Naive thymus-derived CD4-positive, alpha-beta T cell (primary cell): ENCODE measurements at regions of chr12 and their contacts with region 1.

Region 1: DNA sequence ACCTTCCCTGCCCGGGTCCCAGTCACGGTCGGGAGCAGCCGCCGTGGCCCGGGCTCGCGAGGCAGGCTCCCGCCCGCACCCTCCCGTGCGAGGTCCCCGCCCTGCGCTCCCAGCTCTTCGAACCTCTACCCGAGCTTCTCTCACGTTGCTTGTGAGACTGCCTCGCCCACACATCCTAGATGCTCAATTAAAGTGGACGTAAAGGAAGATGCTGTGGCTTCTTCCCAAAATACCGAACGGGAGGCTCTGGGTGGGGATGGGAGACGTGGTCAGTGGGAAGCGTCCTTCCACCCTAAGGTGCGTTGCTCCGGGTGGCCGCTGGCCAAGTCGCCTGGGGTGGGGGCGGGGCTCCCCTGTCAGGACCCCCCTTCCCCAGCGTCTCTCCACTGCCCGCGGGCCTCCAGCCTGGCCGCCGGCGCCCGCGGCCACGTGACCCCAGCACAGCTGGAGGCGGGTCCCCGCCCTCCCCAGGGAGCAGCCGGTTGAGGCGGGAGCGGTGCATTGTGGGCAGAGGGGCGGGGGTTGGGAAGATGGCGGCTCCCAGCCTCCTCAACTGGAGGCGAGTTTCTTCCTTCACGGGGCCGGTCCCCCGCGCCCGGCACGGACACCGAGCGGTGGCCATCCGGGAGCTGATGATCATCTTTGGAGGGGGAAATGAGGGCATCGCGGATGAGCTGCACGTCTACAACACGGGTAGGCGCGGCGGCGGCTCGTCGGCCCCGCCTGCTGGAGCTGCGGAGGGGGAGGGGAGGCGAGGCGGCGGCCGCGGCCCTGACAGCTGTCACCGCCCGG is at the start of gene HCFC2:
- DNase-seq: peak; percentile 77 to 93 (median 83)
- ATAC-seq: peak; percentile 99
- H3K4me3 ChIP-seq: peak within 1 kb of the TSS; percentile 95
- H3K4me3 Mint-ChIP-seq: peak within 1 kb of the TSS; percentile 88 to 97 (median 94)
- H3K27ac ChIP-seq: peak within 1 kb of the TSS; percentile 79
- H3K27ac Mint-ChIP-seq: peak within 1 kb of the TSS; percentile 71 to 96 (median 90)
- H3K4me1 ChIP-seq: peaks cover 5 to 9% of the 10 kb centered on the region in 2 donors
- H3K4me1 Mint-ChIP-seq: peaks cover 13 to 31% (median 21%) of the 10 kb centered on the region in 7 donors
- H3K27me3 ChIP-seq: no peaks in the 10 kb centered on the region
- H3K27me3 Mint-ChIP-seq: peaks cover 5 to 27% (median 13%) of the 10 kb centered on the region in 5 donors
- total RNA-seq, gene HCFC2: 11.4 to 20.2 (median 16.2) TPM

Region 2: DNA sequence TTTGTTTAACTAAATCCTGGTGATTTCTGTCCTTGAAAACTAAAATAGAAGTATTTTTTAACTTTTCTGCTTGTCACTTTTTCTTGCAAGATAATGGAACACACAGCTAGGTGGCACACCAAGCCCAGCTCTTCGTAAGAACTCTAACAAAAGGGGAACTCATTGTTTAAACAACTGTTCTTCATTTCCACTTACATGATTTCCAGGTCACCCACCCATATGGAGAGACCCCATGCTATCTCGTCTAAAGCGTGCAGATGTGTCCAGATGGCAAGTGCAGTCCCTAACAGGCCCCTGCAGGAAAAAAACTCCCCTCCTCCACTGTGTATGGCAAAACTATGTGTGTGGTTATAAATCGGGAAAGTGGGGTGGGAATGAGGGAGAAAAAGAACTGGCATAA is 179.9 kb before region 1 on chr12:
- CTCF ChIA-PET with region 1: no interaction called
- POLR2A ChIA-PET with region 1: no interaction called
- intact Hi-C with region 1: loop called in 1 of 2 experiments (anchors 2 kb)
- DNase-seq: peak in 7 of 9 donors; percentile 36 to 68 (median 53)
- ATAC-seq: peak; percentile 68
- H3K4me3 ChIP-seq: no peak overlapping the region
- H3K4me3 Mint-ChIP-seq: peak overlapping the region in 3 of 10 donors; percentile 30 to 64 (median 39)
- H3K27ac ChIP-seq: no peak overlapping the region
- H3K27ac Mint-ChIP-seq: peak overlapping the region in 6 of 9 donors; percentile 19 to 74 (median 46)
- H3K4me1 ChIP-seq: no peaks in the 10 kb centered on the region
- H3K4me1 Mint-ChIP-seq: peaks cover 4 to 24% (median 16%) of the 10 kb centered on the region in 7 donors
- H3K27me3 ChIP-seq: no peaks in the 10 kb centered on the region
- H3K27me3 Mint-ChIP-seq: no peaks in the 10 kb centered on the region

Region 3: DNA sequence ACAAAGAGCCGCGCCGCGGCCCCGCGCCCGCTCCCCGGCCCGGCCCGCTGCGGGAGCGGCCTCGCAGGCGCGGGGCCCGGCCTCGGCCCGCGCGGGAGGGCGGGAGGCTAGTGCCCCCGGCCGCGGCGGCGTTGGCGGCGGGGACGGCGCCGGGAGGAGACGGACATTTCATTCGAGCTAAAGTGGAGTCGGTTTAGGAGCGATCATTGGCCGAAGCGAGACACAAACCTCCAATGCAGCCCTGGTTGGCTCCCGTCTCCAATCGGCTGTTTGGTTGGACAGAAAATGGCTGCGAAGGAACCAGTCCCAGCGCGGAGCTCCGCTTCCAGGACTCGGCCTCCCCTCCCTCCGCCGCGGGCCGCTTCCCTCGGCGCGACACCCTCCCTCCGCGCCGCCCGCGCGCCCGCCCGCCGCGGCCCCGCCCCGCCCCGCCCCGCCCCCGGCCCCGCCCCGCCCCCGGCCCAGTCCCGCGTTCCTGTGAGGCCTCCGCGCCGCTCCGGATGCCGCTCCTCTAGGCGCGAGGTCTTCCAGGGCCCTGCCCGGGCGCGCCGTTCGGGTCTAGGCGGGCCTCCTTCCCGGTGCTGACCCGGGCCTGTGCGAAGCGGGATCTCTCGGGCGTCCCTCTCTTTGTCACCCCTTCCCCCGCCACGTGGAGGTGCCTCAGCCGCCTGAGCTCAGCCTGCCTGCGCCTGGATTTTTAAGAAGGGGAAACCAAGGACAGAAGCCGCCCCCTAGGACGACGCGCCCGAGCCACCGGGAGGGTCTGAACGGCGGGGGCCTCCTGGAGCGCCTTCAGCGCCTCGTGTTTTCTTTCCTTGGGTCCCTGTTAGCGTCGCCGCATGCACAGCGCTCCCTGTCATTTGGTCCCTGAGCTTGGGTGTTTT is 73.9 kb after region 1 on chr12 and contains the start of gene NFYB:
- CTCF ChIA-PET with region 1: interaction called, 3 read pairs
- POLR2A ChIA-PET with region 1: interaction called, 10 read pairs
- intact Hi-C with region 1: loop called (anchors 1 kb)
- DNase-seq: peak; percentile 90 to 96 (median 94)
- ATAC-seq: peak; percentile 97
- H3K4me3 ChIP-seq: peak within 1 kb of the TSS; percentile 69
- H3K4me3 Mint-ChIP-seq: peak within 1 kb of the TSS; percentile 81 to 93 (median 90)
- H3K27ac ChIP-seq: peak within 1 kb of the TSS; percentile 72
- H3K27ac Mint-ChIP-seq: peak within 1 kb of the TSS; percentile 71 to 95 (median 89)
- H3K4me1 ChIP-seq: peaks cover 10 to 23% of the 10 kb centered on the region in 2 donors
- H3K4me1 Mint-ChIP-seq: peaks cover 0 to 22% (median 9%) of the 10 kb centered on the region in 7 donors
- H3K27me3 ChIP-seq: no peaks in the 10 kb centered on the region
- H3K27me3 Mint-ChIP-seq: peaks cover 0 to 24% (median 0%) of the 10 kb centered on the region in 5 donors
- total RNA-seq, gene NFYB: 11.6 to 25.9 (median 24.4) TPM

Region 4: DNA sequence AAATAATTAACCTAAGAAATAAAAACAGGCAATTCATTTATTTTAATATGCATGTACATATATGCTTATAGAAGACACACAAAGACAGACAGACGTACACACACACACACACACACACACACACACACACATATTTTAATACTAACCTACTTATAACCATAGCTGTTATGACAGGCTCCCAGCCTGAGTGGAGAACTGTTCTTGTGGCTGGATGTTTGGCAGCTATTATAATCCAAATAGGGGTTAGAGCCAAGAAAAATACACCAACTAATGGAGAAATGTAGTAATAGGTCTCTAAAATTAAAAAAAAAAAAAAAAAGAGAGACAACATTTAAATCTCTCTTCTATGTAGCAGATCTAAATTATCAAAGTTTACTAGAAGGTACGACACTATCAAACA is 802.1 kb after region 1 on chr12:
- CTCF ChIA-PET with region 1: no interaction called
- POLR2A ChIA-PET with region 1: no interaction called
- intact Hi-C with region 1: no loop called
- DNase-seq: no peak
- ATAC-seq: no peak
- H3K4me3 ChIP-seq: no peak overlapping the region
- H3K4me3 Mint-ChIP-seq: no peak overlapping the region
- H3K27ac ChIP-seq: no peak overlapping the region
- H3K27ac Mint-ChIP-seq: no peak overlapping the region
- H3K4me1 ChIP-seq: no peaks in the 10 kb centered on the region
- H3K4me1 Mint-ChIP-seq: peaks cover 0 to 12% (median 8%) of the 10 kb centered on the region in 7 donors
- H3K27me3 ChIP-seq: no peaks in the 10 kb centered on the region
- H3K27me3 Mint-ChIP-seq: peaks cover 0 to 14% (median 12%) of the 10 kb centered on the region in 5 donors